Caco-2 (cell line): ENCODE measurements at regions of chr6 and their contacts with region 1.

Region 1: DNA sequence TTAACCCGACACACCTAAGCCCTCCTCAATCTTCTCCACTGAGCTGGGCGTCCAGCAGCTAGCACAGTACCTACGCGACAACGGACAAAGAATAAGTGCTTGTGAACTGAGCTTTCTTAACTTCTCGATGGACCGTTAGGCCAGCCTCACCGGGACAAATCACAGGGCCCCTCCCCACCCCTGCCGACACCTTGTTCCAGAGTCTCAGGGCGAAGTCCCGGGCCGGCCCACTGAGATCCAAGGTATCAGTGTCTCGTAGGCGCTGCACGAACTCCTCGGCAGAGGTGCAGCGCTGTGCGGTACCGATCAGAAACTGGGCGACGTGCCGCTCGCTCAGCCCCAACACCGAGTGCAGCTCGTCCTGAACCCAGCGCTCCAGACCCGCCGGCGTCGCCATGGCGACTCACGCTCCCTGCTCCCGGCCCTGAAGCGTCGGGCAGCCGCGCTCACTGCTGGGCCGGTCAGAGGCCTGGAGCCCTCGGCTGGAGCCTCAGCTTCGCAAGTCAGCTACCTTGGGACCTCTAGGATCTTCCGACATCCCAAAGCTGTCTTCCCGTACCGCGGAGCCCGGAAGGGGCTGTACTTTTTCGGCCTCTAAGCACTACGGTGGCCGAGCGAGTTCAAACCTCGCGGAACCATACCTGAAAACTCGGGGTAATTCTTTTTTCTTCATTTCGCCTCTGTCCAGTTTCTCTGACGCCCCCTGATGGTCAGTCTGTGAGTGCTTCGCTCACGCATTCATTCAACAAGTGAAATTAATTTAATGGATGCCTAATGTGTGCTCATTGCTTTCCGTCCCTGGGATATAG is at the start of gene DHX16:
- DNase-seq: peak; percentile 96
- H3K4me3 ChIP-seq: peak within 1 kb of the TSS; percentile 85
- H3K4me3 Mint-ChIP-seq: peak within 1 kb of the TSS; percentile 77
- H3K27ac Mint-ChIP-seq: peak within 1 kb of the TSS; percentile 71
- H3K4me1 ChIP-seq: peaks cover 6% of the 10 kb centered on the region
- H3K4me1 Mint-ChIP-seq: peaks cover 5% of the 10 kb centered on the region
- H3K27me3 ChIP-seq: no peaks in the 10 kb centered on the region
- H3K27me3 Mint-ChIP-seq: no peaks in the 10 kb centered on the region
- CTCF ChIP-seq: peak; percentile 80 to 85
- total RNA-seq, gene DHX16: 36.6 and 40.6 TPM in 2 replicates

Region 2: DNA sequence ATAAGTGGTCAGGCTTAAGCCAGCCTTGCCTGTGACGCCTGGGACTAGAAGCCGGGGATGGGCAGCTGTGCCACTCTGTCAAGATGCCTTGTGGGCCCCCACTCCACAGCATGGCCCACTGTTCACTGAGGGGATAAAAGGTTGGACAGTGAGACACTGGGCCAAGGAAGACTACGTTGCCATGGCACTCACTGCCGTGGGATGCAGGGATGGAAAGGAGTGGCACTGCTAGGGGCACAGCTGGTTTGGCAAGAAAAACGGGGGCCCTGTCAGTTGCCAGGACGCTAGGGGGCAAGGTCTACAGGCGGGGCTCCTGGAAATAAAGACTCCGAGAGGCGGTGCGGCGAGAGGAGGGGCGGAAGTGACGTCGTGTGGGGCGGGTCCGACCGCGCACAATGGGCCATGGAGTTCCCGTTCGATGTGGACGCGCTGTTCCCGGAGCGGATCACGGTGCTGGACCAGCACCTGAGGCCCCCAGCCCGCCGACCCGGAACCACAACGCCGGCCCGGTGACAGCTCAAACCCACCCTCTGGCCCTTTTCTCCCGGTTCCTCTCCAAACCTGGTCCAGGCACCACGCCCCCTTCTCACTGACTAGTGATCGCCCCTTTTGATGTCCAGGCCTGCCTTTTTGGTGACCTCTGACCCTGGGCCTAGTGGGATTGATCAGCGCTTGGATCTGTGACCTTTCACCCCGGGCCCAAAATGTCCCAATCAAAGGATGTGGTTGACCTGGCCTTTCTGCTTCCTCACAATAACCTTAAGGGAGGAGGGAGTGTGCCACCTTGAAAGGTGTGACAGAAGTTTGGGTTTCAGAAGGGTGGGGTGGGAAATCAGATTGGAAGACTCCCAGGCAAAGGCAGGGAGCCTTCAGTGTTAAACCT is 45.9 kb before region 1 on chr6 and contains the start of gene ATAT1:
- CTCF ChIA-PET with region 1: no interaction called
- POLR2A ChIA-PET with region 1: no interaction called
- intact Hi-C with region 1: loop called (anchors 2 kb)
- DNase-seq: peak; percentile 89 to 91
- H3K4me3 ChIP-seq: peak within 1 kb of the TSS; percentile 53
- H3K4me3 Mint-ChIP-seq: peak within 1 kb of the TSS; percentile 84
- H3K27ac Mint-ChIP-seq: peak within 1 kb of the TSS; percentile 97
- H3K4me1 ChIP-seq: peaks cover 5% of the 10 kb centered on the region; the same call in 1 of the 2 replicates
- H3K4me1 Mint-ChIP-seq: peaks cover 14% of the 10 kb centered on the region
- H3K27me3 ChIP-seq: no peaks in the 10 kb centered on the region
- H3K27me3 Mint-ChIP-seq: no peaks in the 10 kb centered on the region
- CTCF ChIP-seq: peak; percentile 42 to 45
- total RNA-seq, gene ATAT1: 17.9 and 19.7 TPM in 2 replicates

Region 3: DNA sequence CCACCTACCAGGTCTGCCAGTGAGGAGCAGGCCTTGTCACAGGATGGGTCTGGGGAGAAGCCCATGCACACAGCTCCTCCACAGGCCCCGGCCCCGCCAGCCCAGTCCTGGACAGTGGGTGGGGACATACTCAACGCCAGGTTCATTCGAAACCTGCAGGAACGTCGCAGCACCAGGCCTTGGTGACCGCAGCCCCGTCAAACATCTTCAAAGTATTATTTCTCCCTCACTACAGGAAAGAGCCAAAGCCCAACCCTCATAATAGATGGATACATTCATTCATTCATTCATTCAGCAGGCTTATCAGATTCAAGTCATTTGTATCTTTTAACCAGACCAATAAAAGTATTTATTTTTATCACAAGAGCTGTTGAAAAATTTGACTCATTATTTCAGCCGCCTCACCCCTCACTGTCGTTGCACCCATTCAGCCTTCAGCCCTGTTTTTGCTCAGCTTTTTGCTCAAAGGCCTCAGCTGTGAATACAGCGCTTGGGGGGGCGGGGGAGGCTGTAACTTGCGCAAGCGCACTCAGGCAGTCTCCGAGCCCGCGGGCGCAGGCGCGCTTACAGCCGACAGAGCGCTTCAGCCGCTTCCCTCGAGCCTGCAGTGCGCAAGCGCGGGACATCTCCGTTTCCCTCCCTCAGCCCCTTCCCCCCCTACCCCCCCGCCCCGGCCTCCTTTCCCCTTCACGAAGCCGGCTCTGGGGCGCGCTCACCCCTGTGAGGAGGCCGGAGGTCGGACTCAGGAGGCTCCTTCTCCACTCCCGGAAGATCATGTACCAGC is 26.0 kb before region 1 on chr6 and contains the start of gene C6orf136:
- CTCF ChIA-PET with region 1: no interaction called
- POLR2A ChIA-PET with region 1: no interaction called
- intact Hi-C with region 1: loop called (anchors 2 kb)
- DNase-seq: peak; percentile 91 to 93
- H3K4me3 ChIP-seq: peak within 1 kb of the TSS; percentile 83
- H3K4me3 Mint-ChIP-seq: peak within 1 kb of the TSS; percentile 82
- H3K27ac Mint-ChIP-seq: peak within 1 kb of the TSS; percentile 67
- H3K4me1 ChIP-seq: no peaks in the 10 kb centered on the region
- H3K4me1 Mint-ChIP-seq: peaks cover 16% of the 10 kb centered on the region
- H3K27me3 ChIP-seq: no peaks in the 10 kb centered on the region
- H3K27me3 Mint-ChIP-seq: no peaks in the 10 kb centered on the region
- CTCF ChIP-seq: no peak
- total RNA-seq, gene C6orf136: 25.4 and 25.7 TPM in 2 replicates

Region 4: GRCh38 chr6:30810813-30811329 is 138.2 kb after region 1 on chr6:
- CTCF ChIA-PET with region 1: no interaction called
- POLR2A ChIA-PET with region 1: no interaction called
- intact Hi-C with region 1: no loop called
- DNase-seq: no peak
- H3K4me3 ChIP-seq: no peak overlapping the region
- H3K4me3 Mint-ChIP-seq: no peak overlapping the region
- H3K27ac Mint-ChIP-seq: no peak overlapping the region
- H3K4me1 ChIP-seq: no peaks in the 10 kb centered on the region; the same call in 1 of the 2 replicates
- H3K4me1 Mint-ChIP-seq: peaks cover 19% of the 10 kb centered on the region
- H3K27me3 ChIP-seq: no peaks in the 10 kb centered on the region
- H3K27me3 Mint-ChIP-seq: no peaks in the 10 kb centered on the region
- CTCF ChIP-seq: no peak